Prostate gland (tissue), 2 donors: ENCODE measurements at regions of chr13 and their contacts with region 1.

Region 1: GRCh38 chr13:112606109-112607001 is 18.4 kb upstream of the TUBGCP3 start:
- DNase-seq: peak; percentile 89
- H3K4me3 ChIP-seq: peak overlapping the region; percentile 31 to 32
- H3K27ac ChIP-seq: peak overlapping the region; percentile 36 to 50
- H3K4me1 ChIP-seq: no peaks in the 10 kb centered on the region
- H3K27me3 ChIP-seq: no peaks in the 10 kb centered on the region
- CTCF ChIP-seq: peak; percentile 75 to 97 (median 92)
- POLR2A ChIP-seq: peak; percentile 34

Region 2: DNA sequence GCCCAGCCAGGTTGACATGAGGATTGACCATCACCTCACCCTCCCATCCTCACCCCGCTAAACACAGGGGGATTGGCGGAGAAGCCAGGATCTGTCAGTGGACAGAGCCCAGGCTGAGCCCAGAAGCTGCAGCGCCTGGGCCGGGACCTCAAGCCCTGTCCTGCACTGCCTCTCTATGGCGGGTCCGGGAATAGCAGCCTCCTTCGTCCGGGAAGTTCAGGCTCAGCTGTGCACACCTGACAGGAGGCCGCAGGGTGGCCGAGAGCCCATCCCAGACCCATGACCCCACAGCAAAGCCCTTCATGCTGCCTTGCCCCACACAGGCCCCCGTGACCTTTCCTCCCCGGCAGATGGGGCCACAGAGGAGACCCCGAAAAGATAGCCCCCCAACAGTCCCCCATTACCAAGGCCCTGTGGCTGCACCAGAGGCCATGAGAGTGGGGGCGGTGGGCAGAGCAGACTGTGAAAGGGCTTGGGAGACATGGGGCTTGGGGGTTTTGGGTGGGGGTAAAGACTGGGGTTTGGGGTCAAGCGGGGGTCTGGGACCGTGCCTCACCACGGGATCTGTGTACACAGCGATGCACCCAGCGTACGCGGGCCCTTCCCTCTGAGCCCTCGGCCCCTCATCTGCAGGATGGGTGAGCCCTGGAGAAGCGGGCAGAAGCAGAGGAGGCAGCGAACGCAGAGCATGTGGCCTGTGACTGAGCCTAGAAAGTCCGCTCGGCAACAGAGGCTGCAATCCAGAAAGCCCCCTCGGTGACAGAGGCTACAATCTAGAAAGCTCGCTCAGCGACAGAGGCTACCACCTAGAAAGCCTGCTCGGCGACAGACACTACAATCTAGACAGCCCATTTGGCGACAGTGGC is 162.1 kb before region 1 on chr13:
- intact Hi-C with region 1: loop called (anchors 5 kb)
- DNase-seq: peak; percentile 36
- H3K4me3 ChIP-seq: no peak overlapping the region
- H3K27ac ChIP-seq: no peak overlapping the region
- H3K4me1 ChIP-seq: no peaks in the 10 kb centered on the region
- H3K27me3 ChIP-seq: peaks cover 12% of the 10 kb centered on the region
- CTCF ChIP-seq: peak; percentile 56 to 80 (median 72)
- POLR2A ChIP-seq: no peak